ENCODE measurements at regions of chr11 and their contacts with region 1.

Region 1: GRCh38 chr11:100687630-100688395 is 725 bp downstream of the ARHGAP42 start:
- DNase-seq: peak; percentile 75
- ATAC-seq: peak; percentile 85
- H3K4me3 ChIP-seq: peak overlapping the region; percentile 76 to 77
- H3K27ac ChIP-seq: peak overlapping the region; percentile 74
- H3K4me1 ChIP-seq: peaks cover 26% of the 10 kb centered on the region
- H3K27me3 ChIP-seq: no peaks in the 10 kb centered on the region
- CTCF ChIP-seq: peak; percentile 88

Region 2: DNA sequence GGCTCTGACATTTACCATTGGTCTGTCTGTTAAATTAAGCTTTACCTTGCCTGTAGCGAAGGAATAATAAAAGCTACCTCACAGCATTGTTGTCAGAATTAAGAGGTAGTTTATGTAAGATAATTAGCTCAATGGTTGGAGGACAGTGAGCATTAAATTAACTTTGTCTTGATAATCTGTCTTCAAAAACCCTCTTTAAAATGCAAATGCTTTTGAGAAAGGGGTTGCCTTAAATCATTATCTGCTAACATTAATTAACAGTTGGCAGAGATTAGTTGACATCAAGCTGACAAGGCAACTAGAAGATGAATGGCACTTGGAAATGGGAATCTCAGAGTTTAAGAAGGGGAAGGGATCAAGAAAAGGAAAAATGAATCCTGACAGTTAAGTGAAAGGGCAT is 761.8 kb before region 1 on chr11:
- CTCF ChIA-PET with region 1: no interaction called
- POLR2A ChIA-PET with region 1: no interaction called
- in situ Hi-C with region 1: no loop called
- intact Hi-C with region 1: no loop called
- DNase-seq: no peak
- ATAC-seq: no peak
- H3K4me3 ChIP-seq: no peak overlapping the region
- H3K27ac ChIP-seq: no peak overlapping the region
- H3K4me1 ChIP-seq: no peaks in the 10 kb centered on the region
- H3K27me3 ChIP-seq: no peaks in the 10 kb centered on the region
- CTCF ChIP-seq: no peak

Region 3: GRCh38 chr11:100703801-100704575 is 16.2 kb after region 1 on chr11:
- CTCF ChIA-PET with region 1: interaction called, 12 read pairs
- POLR2A ChIA-PET with region 1: no interaction called
- in situ Hi-C with region 1: no loop called
- intact Hi-C with region 1: no loop called
- DNase-seq: no peak
- ATAC-seq: no peak
- H3K4me3 ChIP-seq: no peak overlapping the region
- H3K27ac ChIP-seq: no peak overlapping the region
- H3K4me1 ChIP-seq: no peaks in the 10 kb centered on the region; the same call in 1 of the 2 replicates
- H3K27me3 ChIP-seq: no peaks in the 10 kb centered on the region
- CTCF ChIP-seq: no peak